Testis (tissue), 5 donors: ENCODE measurements at regions of chr7 and their contacts with region 1.

Region 1: GRCh38 chr7:25259587-25260243 is 31.4 kb upstream of the NPVF start:
- DNase-seq: peak; percentile 82
- H3K4me3 ChIP-seq: no peak overlapping the region
- H3K27ac ChIP-seq: no peak overlapping the region
- H3K4me1 ChIP-seq: no peaks in the 10 kb centered on the region
- H3K27me3 ChIP-seq: no peaks in the 10 kb centered on the region
- CTCF ChIP-seq: peak; percentile 61 to 78 (median 76)
- POLR2A ChIP-seq: no peak

Region 2: GRCh38 chr7:23997993-23998392 is 1261.7 kb before region 1 on chr7:
- intact Hi-C with region 1: no loop called
- DNase-seq: no peak
- H3K4me3 ChIP-seq: no peak overlapping the region
- H3K27ac ChIP-seq: no peak overlapping the region
- H3K4me1 ChIP-seq: no peaks in the 10 kb centered on the region
- H3K27me3 ChIP-seq: no peaks in the 10 kb centered on the region
- CTCF ChIP-seq: no peak
- POLR2A ChIP-seq: no peak

Region 3: GRCh38 chr7:25048444-25048834 is 211.3 kb before region 1 on chr7:
- intact Hi-C with region 1: no loop called
- DNase-seq: no peak
- H3K4me3 ChIP-seq: no peak overlapping the region
- H3K27ac ChIP-seq: no peak overlapping the region
- H3K4me1 ChIP-seq: no peaks in the 10 kb centered on the region
- H3K27me3 ChIP-seq: no peaks in the 10 kb centered on the region
- CTCF ChIP-seq: no peak
- POLR2A ChIP-seq: no peak

Region 4: DNA sequence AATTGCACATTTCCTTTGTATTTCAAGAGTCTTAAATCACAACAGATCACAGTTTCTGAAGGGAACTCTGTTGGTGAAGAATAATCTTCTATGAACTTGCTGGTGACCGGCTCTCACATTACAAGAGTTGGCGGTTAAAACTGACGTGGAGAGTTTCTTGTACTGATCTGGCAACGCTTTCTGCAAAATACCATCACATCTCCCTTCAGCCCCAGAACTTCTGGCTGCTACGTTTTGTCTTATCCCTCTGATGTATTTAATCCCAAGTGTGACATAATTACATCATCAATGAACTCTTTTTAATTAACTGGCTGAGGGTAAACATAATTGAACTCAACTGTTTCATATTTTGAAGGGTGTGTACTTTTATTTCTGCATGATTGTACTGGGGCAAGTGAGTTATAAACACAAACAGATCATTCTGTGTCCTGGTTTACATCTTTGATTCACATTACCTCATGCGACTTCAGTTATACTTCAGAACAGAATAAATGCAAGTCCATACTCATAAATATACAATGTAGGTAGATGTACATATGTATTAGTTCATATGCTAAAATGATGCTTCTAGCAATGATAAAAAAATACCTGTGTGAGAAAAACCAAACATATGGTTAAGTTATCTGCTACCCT is 73.7 kb after region 1 on chr7:
- intact Hi-C with region 1: no loop called
- DNase-seq: no peak
- H3K4me3 ChIP-seq: no peak overlapping the region
- H3K27ac ChIP-seq: no peak overlapping the region
- H3K4me1 ChIP-seq: no peaks in the 10 kb centered on the region
- H3K27me3 ChIP-seq: no peaks in the 10 kb centered on the region
- CTCF ChIP-seq: no peak
- POLR2A ChIP-seq: no peak

Region 5: DNA sequence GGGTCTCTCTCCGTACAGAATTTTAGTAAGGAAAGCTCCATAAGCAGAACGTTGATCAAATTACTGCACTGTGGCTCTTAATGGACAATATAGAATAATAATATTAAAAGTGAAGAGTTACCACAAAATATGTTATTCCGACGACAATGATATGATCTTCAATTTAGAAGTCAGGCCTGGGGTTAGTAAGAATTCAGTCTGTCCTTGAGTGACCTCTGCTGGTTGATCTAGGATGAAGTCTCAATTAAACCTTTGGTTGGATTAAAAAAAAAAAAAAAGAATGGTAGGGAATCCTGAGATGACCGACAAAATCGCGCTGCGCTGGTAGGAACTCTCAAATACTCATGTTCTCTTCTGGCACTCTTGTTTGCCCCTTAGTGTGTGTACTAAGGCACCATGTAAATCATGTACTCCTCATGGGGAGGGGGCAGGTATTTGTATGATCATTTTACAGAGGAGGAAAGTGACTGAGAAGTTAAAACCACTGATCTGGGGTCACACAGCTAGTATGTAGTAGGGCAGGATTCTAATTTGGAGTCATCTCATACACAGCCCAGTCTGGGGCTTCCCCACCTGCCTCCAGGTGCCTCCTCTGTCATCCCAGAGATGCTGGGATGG is 129.9 kb after region 1 on chr7:
- intact Hi-C with region 1: loop called (anchors 5 kb)
- DNase-seq: peak; percentile 22
- H3K4me3 ChIP-seq: no peak overlapping the region
- H3K27ac ChIP-seq: no peak overlapping the region
- H3K4me1 ChIP-seq: peaks cover 14% of the 10 kb centered on the region
- H3K27me3 ChIP-seq: no peaks in the 10 kb centered on the region
- CTCF ChIP-seq: peak; percentile 38 to 52 (median 39)
- POLR2A ChIP-seq: no peak

Region 6: GRCh38 chr7:25557379-25557917 is 297.7 kb after region 1 on chr7:
- intact Hi-C with region 1: loop called (anchors 10 kb)
- DNase-seq: no peak
- H3K4me3 ChIP-seq: no peak overlapping the region
- H3K27ac ChIP-seq: peak overlapping the region in 1 of 2 donors; percentile 38
- H3K4me1 ChIP-seq: peaks cover 21% of the 10 kb centered on the region
- H3K27me3 ChIP-seq: no peaks in the 10 kb centered on the region
- CTCF ChIP-seq: no peak
- POLR2A ChIP-seq: no peak